GM10248 (cell line): ENCODE measurements at regions of chr13 and their contacts with region 1.

Region 1: GRCh38 chr13:23777575-23777870 is 111.7 kb downstream of the MIPEP start:
- DNase-seq: no peak
- CTCF ChIP-seq: no peak

Region 2: GRCh38 chr13:23794267-23795161 is 17.0 kb after region 1 on chr13:
- CTCF ChIA-PET with region 1: interaction called, 10 read pairs
- POLR2A ChIA-PET with region 1: no interaction called
- DNase-seq: peak; percentile 55
- CTCF ChIP-seq: no peak

Region 3: DNA sequence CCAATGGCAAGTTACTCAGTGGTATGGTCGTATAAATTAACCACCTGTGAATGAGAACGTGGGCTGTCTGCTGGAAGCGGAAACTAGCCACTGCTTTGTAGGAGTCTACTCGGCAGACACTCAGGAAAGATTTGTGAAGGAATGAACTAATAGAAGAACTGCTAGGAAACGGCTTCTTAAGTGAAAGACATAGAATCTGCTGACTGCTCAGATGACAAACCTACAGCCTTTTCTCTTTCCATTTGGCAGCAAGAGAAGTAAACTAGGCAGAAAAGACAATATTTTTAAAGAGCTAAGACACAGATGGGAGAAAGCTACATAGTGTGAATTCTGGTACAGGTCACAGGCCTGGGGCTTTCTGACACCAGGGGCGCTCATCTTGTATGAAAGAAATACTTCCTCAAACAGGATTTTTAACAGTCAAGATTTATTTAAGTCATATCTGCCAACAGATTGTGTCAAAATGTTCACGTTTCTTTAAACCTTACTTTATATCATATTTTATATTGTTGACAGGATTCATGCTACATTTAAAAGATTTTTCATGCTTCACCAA is 33.2 kb after region 1 on chr13:
- CTCF ChIA-PET with region 1: no interaction called
- POLR2A ChIA-PET with region 1: no interaction called
- DNase-seq: peak; percentile 36
- CTCF ChIP-seq: peak; percentile 41